ENCODE measurements at regions of chr5 and their contacts with region 1.

Region 1: DNA sequence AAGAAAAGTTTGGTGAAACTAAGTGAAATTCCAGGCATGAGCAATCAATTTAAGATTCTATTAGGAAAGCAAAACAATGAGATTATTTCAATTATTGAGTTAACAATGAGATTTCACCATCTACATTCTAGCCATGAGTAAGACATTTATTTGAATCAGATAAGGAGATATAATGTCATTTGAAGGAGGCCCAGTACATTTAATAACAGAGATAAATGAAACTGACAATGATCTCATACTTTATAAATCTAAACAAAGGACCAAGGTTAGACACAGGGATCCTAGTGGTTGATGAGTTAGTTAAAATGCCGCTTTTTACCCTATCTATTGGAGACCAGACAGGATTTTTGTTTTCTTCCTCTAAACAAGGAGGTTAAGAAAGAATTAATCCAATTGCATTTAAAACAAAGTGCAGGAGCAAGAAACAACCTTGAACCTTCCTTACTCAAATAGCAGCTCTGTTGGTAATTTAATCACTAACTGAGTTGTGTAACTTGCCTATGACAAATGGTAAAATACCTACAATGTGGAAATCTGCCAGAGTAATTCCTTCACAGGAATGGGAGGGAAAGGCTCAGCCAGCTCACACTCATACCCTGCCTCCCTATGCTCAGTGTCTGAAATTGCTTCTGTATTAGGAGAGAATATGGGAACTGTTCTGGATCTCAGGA is 103.5 kb upstream of the NR3C1 start:
- DNase-seq: peak; percentile 99
- ATAC-seq: peak; percentile 98
- H3K4me3 ChIP-seq: peak overlapping the region in 2 of 3 experiments; percentile 0 to 49; a peak in 1 of 6 replicates
- H3K27ac ChIP-seq: peak overlapping the region; percentile 99
- H3K4me1 ChIP-seq: peaks cover 49% of the 10 kb centered on the region
- H3K27me3 ChIP-seq: no peaks in the 10 kb centered on the region
- CTCF ChIP-seq: peak; percentile 58
- EP300 ChIP-seq: peak; percentile 76 to 99
- POLR2A ChIP-seq: peak in 1 of 2 experiments; percentile 46; a peak in 1 of 4 replicates
- RAD21 ChIP-seq: peak; percentile 41; the same call in 1 of the 2 replicates

Region 2: GRCh38 chr5:143554187-143554717 is 47.2 kb after region 1 on chr5:
- CTCF ChIA-PET with region 1: no interaction called
- POLR2A ChIA-PET with region 1: interaction called, 10 read pairs
- in situ Hi-C with region 1: no loop called
- intact Hi-C with region 1: no loop called
- DNase-seq: no peak
- ATAC-seq: no peak
- H3K4me3 ChIP-seq: no peak overlapping the region
- H3K27ac ChIP-seq: peak overlapping the region; percentile 78
- H3K4me1 ChIP-seq: peaks cover 71% of the 10 kb centered on the region
- H3K27me3 ChIP-seq: no peaks in the 10 kb centered on the region
- CTCF ChIP-seq: no peak
- EP300 ChIP-seq: no peak
- POLR2A ChIP-seq: no peak
- RAD21 ChIP-seq: no peak

Region 3: DNA sequence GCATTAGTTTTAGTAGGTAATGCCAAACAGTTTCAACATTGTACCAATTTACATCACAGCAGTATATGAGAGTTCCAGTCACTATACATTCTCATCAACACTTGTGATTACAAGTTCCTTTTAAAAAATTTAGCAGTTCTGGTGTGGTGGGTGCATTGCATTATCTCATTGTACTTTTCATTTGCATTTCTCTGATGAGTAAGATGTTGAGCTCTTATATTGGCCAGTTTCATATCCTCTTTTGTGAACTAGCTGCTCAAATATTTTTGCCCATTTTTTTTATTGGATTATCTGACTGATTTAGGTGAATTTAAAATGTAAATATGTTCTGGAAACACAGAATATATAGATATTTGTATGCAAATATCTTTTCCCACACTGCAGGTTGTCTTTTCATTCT is 57.4 kb after region 1 on chr5:
- CTCF ChIA-PET with region 1: no interaction called
- POLR2A ChIA-PET with region 1: interaction called, 12 read pairs
- in situ Hi-C with region 1: no loop called
- intact Hi-C with region 1: loop called (anchors 2 kb)
- DNase-seq: no peak
- ATAC-seq: no peak
- H3K4me3 ChIP-seq: no peak overlapping the region
- H3K27ac ChIP-seq: no peak overlapping the region
- H3K4me1 ChIP-seq: peaks cover 54% of the 10 kb centered on the region
- H3K27me3 ChIP-seq: no peaks in the 10 kb centered on the region
- CTCF ChIP-seq: no peak
- EP300 ChIP-seq: no peak
- POLR2A ChIP-seq: no peak
- RAD21 ChIP-seq: no peak

Region 4: DNA sequence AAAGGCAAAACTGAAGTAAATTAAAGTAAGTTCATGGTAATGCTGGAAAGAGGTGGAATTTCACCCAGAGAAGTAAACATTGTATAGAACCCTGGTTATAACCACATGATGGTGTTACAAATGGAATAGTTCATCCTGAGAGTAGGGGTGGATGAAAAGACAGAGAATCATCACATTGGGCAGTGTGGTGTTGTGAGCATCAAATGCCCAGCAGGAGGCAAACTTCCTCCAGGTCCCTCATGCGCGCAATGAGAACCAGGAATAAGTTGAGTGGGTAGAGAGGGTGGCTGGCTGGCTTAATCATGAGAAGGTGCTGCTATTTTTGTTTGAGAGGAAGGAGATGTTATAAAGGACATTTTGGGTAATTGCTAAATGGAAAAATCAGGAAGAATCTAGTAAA is 141.7 kb after region 1 on chr5:
- CTCF ChIA-PET with region 1: no interaction called
- POLR2A ChIA-PET with region 1: no interaction called
- in situ Hi-C with region 1: no loop called
- intact Hi-C with region 1: no loop called
- DNase-seq: no peak
- ATAC-seq: peak; percentile 46; the same call in 1 of the 3 replicates
- H3K4me3 ChIP-seq: no peak overlapping the region
- H3K27ac ChIP-seq: no peak overlapping the region
- H3K4me1 ChIP-seq: peaks cover 20% of the 10 kb centered on the region
- H3K27me3 ChIP-seq: peaks cover 0 to 8% of the 10 kb centered on the region in 2 experiments; a peak in 3 of 5 replicates
- CTCF ChIP-seq: peak; percentile 49
- EP300 ChIP-seq: no peak
- POLR2A ChIP-seq: no peak
- RAD21 ChIP-seq: no peak

Region 5: GRCh38 chr5:143673676-143674447 is 166.8 kb after region 1 on chr5:
- CTCF ChIA-PET with region 1: no interaction called
- POLR2A ChIA-PET with region 1: no interaction called
- in situ Hi-C with region 1: no loop called
- intact Hi-C with region 1: loop called (anchors 5 kb)
- DNase-seq: peak; percentile 81
- ATAC-seq: peak; percentile 99
- H3K4me3 ChIP-seq: no peak overlapping the region
- H3K27ac ChIP-seq: no peak overlapping the region
- H3K4me1 ChIP-seq: peaks cover 41% of the 10 kb centered on the region
- H3K27me3 ChIP-seq: peaks cover 0 to 60% of the 10 kb centered on the region in 2 experiments; a peak in 3 of 5 replicates
- CTCF ChIP-seq: no peak
- EP300 ChIP-seq: peak in 1 of 2 experiments; percentile 84; a peak in 2 of 4 replicates
- POLR2A ChIP-seq: no peak
- RAD21 ChIP-seq: no peak

Measured in HepG2 (cell line).